ENCODE measurements at regions of chr4 and their contacts with region 1.

Region 1: DNA sequence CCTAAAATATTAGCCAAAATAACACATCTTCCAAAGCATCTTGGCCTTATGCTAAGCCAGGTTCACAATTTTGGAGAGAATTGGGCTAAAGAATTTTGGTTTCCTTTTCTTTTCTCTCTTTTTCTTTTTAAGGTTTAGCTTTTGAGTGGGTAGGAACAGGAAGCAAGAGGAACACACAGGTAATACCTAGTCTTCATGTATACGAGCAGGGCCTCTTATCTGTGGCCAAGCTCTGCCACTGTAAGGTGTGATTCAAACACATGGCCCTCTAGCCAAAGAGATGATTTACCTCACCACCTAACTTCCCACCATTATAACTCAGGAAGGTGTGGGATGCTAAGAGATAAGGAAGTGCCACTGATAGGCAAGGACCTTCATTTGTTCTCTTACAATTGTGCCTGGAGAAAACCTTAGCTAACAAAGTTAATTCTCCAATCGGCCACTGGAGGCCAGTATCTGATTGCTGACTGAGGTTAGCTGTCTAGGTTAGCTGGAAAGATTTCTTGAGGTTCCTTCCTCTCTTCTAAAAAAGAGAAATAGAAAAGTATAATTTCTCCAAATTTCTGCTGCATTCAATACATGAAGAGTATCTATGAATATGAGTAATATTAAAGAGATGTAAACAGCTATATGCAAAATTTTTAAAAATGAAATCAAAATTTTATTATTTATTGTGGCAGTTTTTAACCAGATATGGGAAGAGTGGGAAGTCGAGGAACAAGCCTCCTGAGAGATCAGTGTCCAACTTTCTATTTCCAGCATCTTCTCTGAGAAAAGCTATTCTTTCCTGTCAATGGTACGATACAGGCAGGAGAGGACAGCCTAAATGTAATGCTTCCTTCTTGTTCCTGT is 30.1 kb upstream of the BBS7 start:
- DNase-seq: peak; percentile 24
- ATAC-seq: peak; percentile 53 to 61

Region 2: GRCh38 chr4:121448231-121448630 is 452.1 kb before region 1 on chr4:
- intact Hi-C with region 1: no loop called
- DNase-seq: no peak
- ATAC-seq: no peak

Region 3: GRCh38 chr4:121998002-121998401 is 97.6 kb after region 1 on chr4:
- intact Hi-C with region 1: loop called in 1 of 2 experiments (anchors 10 kb)
- DNase-seq: peak; percentile 26
- ATAC-seq: peak in 1 of 2 donors; percentile 30

Region 4: DNA sequence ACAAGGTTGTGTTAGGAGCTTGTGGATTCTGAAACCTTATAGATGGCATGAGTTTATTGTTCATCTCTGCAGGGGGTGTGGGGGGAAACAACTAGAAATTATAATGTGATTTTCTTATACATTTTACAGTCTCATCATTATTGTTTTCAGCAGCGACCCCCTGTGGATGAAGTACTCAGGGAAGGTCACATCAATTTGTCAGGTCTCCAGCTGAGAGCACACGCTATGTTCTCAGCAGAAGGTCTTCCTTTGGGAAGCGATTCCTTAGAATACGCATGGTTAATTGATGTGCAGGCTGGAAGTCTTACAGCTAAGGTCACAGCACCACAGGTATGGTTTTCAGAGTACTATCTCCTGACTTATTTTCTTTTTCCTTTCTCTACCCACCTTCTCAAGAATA is 324.0 kb after region 1 on chr4:
- intact Hi-C with region 1: loop called in 1 of 2 experiments (anchors 10 kb)
- DNase-seq: no peak
- ATAC-seq: no peak

Region 5: GRCh38 chr4:122252584-122252983 is 352.2 kb after region 1 on chr4:
- intact Hi-C with region 1: no loop called
- DNase-seq: no peak
- ATAC-seq: no peak

Region 6: GRCh38 chr4:122577808-122578781 is 677.7 kb after region 1 on chr4:
- intact Hi-C with region 1: loop called (anchors 5 to 10 kb)
- DNase-seq: no peak
- ATAC-seq: peak; percentile 59 to 81

Region 7: DNA sequence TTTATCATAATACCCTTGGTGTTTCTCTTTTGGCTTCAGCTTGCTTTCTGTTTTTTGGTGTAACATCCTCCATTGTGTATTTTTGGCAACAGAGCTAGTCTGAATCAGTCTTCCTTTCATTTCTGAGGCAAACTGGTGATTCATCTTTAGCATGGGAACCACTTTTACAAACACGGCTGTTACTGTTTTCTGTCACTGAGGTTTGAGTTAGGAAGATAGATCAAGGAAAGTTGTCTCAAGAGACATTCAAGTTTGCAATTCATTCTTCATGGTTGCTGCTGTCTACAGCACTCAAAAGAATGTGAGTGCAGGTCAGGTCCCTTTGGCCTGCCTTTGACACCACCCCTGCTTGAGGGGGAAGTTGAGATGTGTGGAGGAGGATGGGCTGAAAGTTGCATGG is 684.2 kb after region 1 on chr4:
- intact Hi-C with region 1: loop called (anchors 5 to 10 kb)
- DNase-seq: no peak
- ATAC-seq: peak in 1 of 2 donors; percentile 65

Measured in left cardiac atrium (tissue), 4 donors.